Esophagus muscularis mucosa (tissue), 4 donors: ENCODE measurements at regions of chr1 and their contacts with region 1.

Region 1: DNA sequence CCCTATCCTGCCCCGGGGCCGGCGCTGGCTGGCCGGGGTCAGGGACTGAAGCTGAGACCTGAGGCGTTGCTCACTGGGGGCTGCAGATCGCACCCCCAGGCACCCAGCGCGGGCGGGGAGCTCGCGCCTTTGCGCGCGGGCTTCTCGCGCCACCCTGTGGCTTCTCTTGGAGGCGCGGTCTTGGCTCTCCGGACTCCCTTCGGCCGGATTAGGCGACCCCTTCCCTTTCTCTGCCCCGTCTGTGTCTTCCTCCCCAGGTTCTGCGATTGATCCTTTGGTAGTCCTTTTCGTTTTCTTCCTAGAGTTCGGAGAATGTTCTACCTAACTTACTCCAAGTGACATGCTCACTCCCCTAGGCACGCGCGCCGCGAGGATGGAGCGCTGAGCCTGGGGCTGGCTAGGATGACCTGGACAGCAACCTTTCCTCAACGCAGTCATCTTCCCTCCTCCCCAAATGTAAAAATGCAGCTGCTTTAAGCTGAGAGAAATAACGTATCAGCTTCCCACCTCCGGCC is 495 bp upstream of the NTRK1 start:
- DNase-seq: no peak
- H3K4me3 ChIP-seq: peak overlapping the region; percentile 37 to 52 (median 40)
- H3K27ac ChIP-seq: no peak overlapping the region
- H3K4me1 ChIP-seq: peaks cover 29 to 33% (median 32%) of the 10 kb centered on the region in 4 donors
- H3K27me3 ChIP-seq: peaks cover 0 to 82% (median 39%) of the 10 kb centered on the region in 4 donors
- CTCF ChIP-seq: peak; percentile 57 to 75 (median 70)
- EP300 ChIP-seq: no peak
- POLR2A ChIP-seq: no peak

Region 2: GRCh38 chr1:156813750-156814570 is 46.2 kb before region 1 on chr1:
- intact Hi-C with region 1: loop called (anchors 5 kb)
- DNase-seq: no peak
- H3K4me3 ChIP-seq: peak overlapping the region; percentile 54 to 61 (median 54)
- H3K27ac ChIP-seq: peak overlapping the region; percentile 51 to 74 (median 64)
- H3K4me1 ChIP-seq: peaks cover 18 to 35% (median 29%) of the 10 kb centered on the region in 4 donors
- H3K27me3 ChIP-seq: peaks cover 0 to 13% (median 0%) of the 10 kb centered on the region in 4 donors
- CTCF ChIP-seq: peak; percentile 49 to 72 (median 49)
- EP300 ChIP-seq: no peak
- POLR2A ChIP-seq: no peak